Naive thymus-derived CD4-positive, alpha-beta T cell (primary cell): ENCODE measurements at regions of chr2 and their contacts with region 1.

Region 1: DNA sequence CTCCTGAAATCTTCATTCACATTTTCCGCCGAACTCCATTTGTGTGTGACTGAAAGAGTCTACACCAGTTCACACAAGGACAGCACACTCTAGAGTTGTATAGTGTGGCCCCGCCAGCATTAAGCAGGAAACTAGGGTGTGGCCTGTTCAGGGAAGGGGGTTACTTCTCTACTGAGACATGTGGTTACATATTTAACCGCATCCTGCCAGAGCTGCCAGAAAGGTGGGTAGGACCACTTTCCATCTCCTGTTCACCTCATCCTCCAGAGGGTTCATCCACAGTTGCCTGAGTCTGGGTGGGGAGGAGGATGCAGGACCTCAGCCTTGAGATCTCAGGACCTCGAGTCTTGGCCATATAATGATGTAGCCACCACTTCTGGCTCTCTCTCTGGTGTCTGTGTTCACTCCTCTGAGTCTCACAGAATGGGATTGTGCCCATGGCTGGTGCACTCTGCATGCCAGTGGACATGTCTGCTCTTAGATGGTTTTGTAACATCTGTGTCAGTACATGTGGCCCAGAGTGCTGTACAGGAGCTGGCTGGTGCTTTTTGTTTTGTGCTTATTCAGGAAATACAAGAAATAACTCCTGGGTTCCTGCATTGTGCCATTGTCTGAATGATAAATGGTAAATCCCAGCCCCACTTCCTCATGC is 7.7 kb upstream of the SP140L start:
- DNase-seq: peak in 8 of 9 donors; percentile 56 to 94 (median 90)
- ATAC-seq: peak; percentile 96
- H3K4me3 ChIP-seq: peak overlapping the region; percentile 34
- H3K4me3 Mint-ChIP-seq: peak overlapping the region; percentile 54 to 85 (median 77)
- H3K27ac ChIP-seq: peak overlapping the region; percentile 72
- H3K27ac Mint-ChIP-seq: peak overlapping the region; percentile 85 to 96 (median 91)
- H3K4me1 ChIP-seq: peaks cover 49 to 63% of the 10 kb centered on the region in 2 donors
- H3K4me1 Mint-ChIP-seq: peaks cover 47 to 89% (median 83%) of the 10 kb centered on the region in 7 donors
- H3K27me3 ChIP-seq: no peaks in the 10 kb centered on the region
- H3K27me3 Mint-ChIP-seq: no peaks in the 10 kb centered on the region

Region 2: GRCh38 chr2:230225486-230225885 is 93.9 kb before region 1 on chr2 and contains the start of gene SP140:
- CTCF ChIA-PET with region 1: no interaction called
- POLR2A ChIA-PET with region 1: interaction called, 17 read pairs
- intact Hi-C with region 1: loop called (anchors 1 kb)
- DNase-seq: peak; percentile 34 to 91 (median 77)
- ATAC-seq: peak; percentile 97
- H3K4me3 ChIP-seq: peak within 1 kb of the TSS; percentile 70
- H3K4me3 Mint-ChIP-seq: peak within 1 kb of the TSS; percentile 82 to 94 (median 87)
- H3K27ac ChIP-seq: peak within 1 kb of the TSS; percentile 79
- H3K27ac Mint-ChIP-seq: peak within 1 kb of the TSS; percentile 95 to 100 (median 98)
- H3K4me1 ChIP-seq: peaks cover 21 to 39% of the 10 kb centered on the region in 2 donors
- H3K4me1 Mint-ChIP-seq: peaks cover 28 to 79% (median 65%) of the 10 kb centered on the region in 7 donors
- H3K27me3 ChIP-seq: no peaks in the 10 kb centered on the region
- H3K27me3 Mint-ChIP-seq: no peaks in the 10 kb centered on the region
- total RNA-seq, gene SP140: 34.5 to 120 (median 45.2) TPM

Region 3: DNA sequence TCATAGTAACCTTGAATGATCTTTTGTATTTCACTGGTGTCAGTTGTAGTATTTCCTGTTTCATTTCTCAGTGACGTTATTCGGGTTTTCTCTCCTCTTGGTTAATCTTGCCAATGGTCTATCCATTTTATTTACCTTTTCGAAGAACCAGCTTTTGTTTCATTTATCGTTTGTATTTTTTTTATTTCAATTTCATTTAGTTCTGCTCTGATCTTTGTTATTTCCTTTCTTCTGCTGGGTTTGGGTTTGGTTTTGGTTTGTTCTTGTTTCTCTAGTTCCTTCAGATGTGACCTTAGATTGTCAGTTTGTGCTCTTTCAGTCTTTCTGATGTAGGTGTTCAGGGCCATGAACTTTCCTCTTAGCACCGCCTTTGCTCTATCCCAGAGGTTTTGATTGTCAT is 57.1 kb before region 1 on chr2:
- CTCF ChIA-PET with region 1: no interaction called
- POLR2A ChIA-PET with region 1: interaction called, 4 read pairs
- intact Hi-C with region 1: loop called (anchors 2 kb)
- DNase-seq: peak in 7 of 9 donors; percentile 32 to 86 (median 77)
- ATAC-seq: peak; percentile 85
- H3K4me3 ChIP-seq: no peak overlapping the region
- H3K4me3 Mint-ChIP-seq: peak overlapping the region in 9 of 10 donors; percentile 54 to 82 (median 67)
- H3K27ac ChIP-seq: peak overlapping the region; percentile 22
- H3K27ac Mint-ChIP-seq: peak overlapping the region; percentile 68 to 99 (median 83)
- H3K4me1 ChIP-seq: peaks cover 13 to 23% of the 10 kb centered on the region in 2 donors
- H3K4me1 Mint-ChIP-seq: peaks cover 29 to 68% (median 53%) of the 10 kb centered on the region in 7 donors
- H3K27me3 ChIP-seq: no peaks in the 10 kb centered on the region
- H3K27me3 Mint-ChIP-seq: no peaks in the 10 kb centered on the region

Region 4: DNA sequence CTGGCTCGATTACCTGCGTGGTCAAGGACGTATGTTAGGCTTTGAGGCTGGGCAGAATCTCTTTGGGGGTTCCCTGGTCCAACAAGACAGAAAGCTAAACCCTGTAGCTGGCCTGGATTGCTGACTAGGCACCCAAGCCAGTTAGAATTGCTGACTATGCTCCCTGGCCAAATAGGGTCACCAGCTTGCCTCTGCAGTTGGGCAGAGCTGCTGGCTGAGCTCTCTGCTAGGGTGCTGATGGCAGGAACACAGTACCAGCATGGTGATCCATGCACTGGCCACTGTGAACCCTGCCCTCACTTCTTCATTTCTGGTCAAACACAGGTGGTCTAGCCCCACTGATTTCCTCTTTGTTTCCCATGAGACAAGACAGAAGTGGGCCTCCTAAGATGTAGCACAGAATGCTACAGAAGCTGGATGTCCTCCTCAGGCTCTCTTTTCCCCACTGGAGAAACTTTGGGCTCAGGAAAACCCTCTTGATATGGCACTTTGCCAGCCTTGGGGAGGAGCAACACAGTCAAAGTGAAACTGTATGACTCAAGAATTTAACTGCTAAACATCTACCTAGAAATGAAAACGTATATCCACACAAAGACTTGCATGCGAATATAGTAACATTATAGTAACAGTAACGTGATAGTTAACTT is 28.4 kb after region 1 on chr2:
- CTCF ChIA-PET with region 1: no interaction called
- POLR2A ChIA-PET with region 1: interaction called, 3 read pairs
- intact Hi-C with region 1: loop called in 1 of 2 experiments (anchors 2 kb)
- DNase-seq: peak in 1 of 9 donors; percentile 37
- ATAC-seq: no peak
- H3K4me3 ChIP-seq: no peak overlapping the region
- H3K4me3 Mint-ChIP-seq: peak overlapping the region; percentile 21 to 77 (median 62)
- H3K27ac ChIP-seq: no peak overlapping the region
- H3K27ac Mint-ChIP-seq: peak overlapping the region in 8 of 9 donors; percentile 20 to 95 (median 78)
- H3K4me1 ChIP-seq: peaks cover 12 to 29% of the 10 kb centered on the region in 2 donors
- H3K4me1 Mint-ChIP-seq: peaks cover 34 to 84% (median 77%) of the 10 kb centered on the region in 7 donors
- H3K27me3 ChIP-seq: no peaks in the 10 kb centered on the region
- H3K27me3 Mint-ChIP-seq: no peaks in the 10 kb centered on the region

Region 5: DNA sequence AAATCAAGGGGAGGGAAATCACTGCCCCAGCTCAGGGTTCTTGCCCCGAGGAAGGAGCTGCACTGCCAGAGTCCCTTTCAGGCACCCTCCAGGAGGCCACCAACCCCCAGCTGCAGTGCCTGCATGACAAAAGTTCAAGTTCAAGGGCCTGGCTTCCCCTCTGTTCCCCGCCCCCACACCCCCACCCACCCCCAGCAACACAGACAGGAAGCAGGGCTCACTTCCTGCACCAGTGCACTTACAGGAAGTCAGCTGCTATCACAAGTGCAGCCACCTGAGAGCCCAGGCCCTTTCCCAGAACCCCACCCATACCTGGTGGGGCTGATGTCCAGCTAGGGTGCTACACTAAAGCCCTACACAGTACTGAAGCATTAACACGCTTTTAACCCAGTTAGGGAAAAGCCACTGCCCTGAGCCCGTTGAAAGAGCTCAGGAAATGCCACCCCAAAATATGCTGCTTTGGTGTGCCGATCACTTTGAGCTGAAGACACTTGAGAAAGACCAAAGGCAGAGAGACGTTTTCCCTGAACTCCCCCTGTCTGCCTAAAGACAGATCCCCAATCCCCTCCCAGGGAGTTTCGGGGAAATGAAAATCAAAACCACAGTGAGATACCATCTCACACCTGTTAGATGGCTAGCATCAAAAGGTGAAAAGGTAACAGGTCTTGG is 283.4 kb after region 1 on chr2:
- CTCF ChIA-PET with region 1: no interaction called
- POLR2A ChIA-PET with region 1: no interaction called
- intact Hi-C with region 1: loop called in 1 of 2 experiments (anchors 2 kb)
- DNase-seq: peak in 7 of 9 donors; percentile 51 to 79 (median 74)
- ATAC-seq: peak; percentile 90
- H3K4me3 ChIP-seq: peak overlapping the region; percentile 14
- H3K4me3 Mint-ChIP-seq: peak overlapping the region; percentile 66 to 90 (median 78)
- H3K27ac ChIP-seq: peak overlapping the region; percentile 64
- H3K27ac Mint-ChIP-seq: peak overlapping the region; percentile 93 to 99 (median 98)
- H3K4me1 ChIP-seq: peaks cover 35 to 38% of the 10 kb centered on the region in 2 donors
- H3K4me1 Mint-ChIP-seq: peaks cover 27 to 84% (median 71%) of the 10 kb centered on the region in 7 donors
- H3K27me3 ChIP-seq: no peaks in the 10 kb centered on the region
- H3K27me3 Mint-ChIP-seq: no peaks in the 10 kb centered on the region

Region 6: DNA sequence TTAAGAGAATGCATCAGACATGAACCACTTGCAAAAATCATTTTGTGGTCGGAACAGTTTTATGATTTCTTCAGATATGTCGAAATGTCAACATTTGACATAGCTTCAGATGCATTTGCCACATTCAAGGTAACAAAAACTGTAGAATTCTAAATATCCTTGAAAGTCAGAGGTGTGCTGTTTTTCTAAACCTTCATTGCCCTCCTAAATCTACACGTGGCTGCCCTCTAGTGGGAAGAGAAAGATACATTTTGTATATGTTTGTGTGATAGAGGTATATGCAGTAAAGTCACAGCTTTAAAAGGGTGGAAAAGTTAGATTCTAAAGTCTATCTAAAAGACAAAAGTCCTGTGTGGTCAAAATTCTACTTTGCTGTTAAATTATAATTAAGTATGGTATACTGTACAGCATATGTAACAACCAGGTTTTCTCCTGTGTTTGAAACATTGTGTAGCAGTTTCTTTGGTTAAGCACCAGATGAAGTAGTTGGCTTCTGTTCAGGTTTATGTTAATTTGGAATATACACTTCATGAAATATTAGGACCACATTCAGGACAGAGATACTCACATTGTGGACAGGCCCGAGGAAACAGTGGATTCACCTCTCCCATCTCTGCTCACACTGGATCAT is 479.5 kb after region 1 on chr2:
- CTCF ChIA-PET with region 1: no interaction called
- POLR2A ChIA-PET with region 1: no interaction called
- intact Hi-C with region 1: loop called in 1 of 2 experiments (anchors 5 kb)
- DNase-seq: peak in 7 of 9 donors; percentile 44 to 76 (median 69)
- ATAC-seq: peak; percentile 58
- H3K4me3 ChIP-seq: no peak overlapping the region
- H3K4me3 Mint-ChIP-seq: peak overlapping the region in 3 of 10 donors; percentile 8 to 33 (median 15)
- H3K27ac ChIP-seq: no peak overlapping the region
- H3K27ac Mint-ChIP-seq: peak overlapping the region in 4 of 9 donors; percentile 59 to 76 (median 69)
- H3K4me1 ChIP-seq: peaks cover 30 to 41% of the 10 kb centered on the region in 2 donors
- H3K4me1 Mint-ChIP-seq: peaks cover 6 to 34% (median 26%) of the 10 kb centered on the region in 7 donors
- H3K27me3 ChIP-seq: no peaks in the 10 kb centered on the region
- H3K27me3 Mint-ChIP-seq: no peaks in the 10 kb centered on the region